K562 (cell line): ENCODE measurements at regions of chr5 and their contacts with region 1.

Region 1: DNA sequence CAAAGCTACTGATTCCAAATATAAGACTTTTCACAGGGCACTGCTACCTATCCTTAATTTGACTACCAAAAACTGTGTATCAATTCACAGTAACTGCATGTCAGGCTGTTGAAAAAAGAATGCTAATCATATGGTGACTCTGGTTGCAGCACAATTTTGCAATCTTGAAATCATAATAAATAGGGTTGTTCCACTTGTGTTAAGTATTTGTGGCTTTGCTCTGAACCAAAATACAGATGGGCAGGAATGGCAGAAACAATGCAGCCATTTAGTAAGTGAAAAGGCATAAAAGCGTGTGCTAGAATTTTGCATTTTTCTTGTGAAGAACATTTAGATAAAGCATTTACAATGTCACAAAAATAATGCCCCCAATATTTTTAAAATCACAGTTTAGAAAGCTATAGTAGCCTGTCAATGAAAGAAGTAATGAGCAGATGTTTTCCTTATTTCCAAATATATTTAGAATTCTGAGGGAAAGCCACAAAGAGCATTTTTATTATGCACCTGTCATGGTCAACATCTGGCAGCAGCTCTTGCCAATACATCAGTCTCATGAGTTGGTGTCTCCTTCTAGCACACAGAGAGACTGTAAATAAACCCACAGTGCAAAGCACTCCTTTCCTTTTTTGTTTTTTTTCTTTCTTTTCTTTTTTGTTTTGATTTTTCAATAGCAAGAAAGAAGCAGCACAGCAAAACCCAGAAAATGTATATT is 54.8 kb upstream of the PAM start:
- DNase-seq: no peak
- ATAC-seq: no peak
- H3K4me3 ChIP-seq: no peak overlapping the region
- H3K27ac ChIP-seq: no peak overlapping the region
- H3K4me1 ChIP-seq: no peaks in the 10 kb centered on the region
- H3K27me3 ChIP-seq: no peaks in the 10 kb centered on the region
- CTCF ChIP-seq: no peak
- EP300 ChIP-seq: no peak
- POLR2A ChIP-seq: no peak
- RAD21 ChIP-seq: no peak

Region 2: DNA sequence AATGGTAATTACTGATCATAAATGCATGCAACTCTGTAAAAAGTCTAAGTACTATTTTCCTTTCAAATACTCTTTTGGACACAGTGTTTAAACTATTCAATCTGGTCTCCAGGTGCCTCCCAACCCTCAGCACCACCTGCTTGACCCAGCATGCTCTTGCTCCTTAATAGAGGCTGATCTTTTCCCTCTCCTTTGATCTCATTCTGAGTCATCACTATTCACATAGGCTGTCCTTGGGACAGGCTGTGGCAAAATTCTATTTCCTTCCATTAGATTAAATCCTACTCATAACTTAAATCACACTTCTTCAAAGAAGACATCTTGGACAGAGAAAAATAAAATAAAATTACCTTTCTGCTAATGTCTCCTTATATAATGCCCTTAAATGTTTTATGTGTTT is 1597.8 kb before region 1 on chr5:
- CTCF ChIA-PET with region 1: no interaction called
- POLR2A ChIA-PET with region 1: no interaction called
- in situ Hi-C with region 1: no loop called
- intact Hi-C with region 1: no loop called
- DNase-seq: no peak
- ATAC-seq: no peak
- H3K4me3 ChIP-seq: no peak overlapping the region
- H3K27ac ChIP-seq: no peak overlapping the region
- H3K4me1 ChIP-seq: no peaks in the 10 kb centered on the region
- H3K27me3 ChIP-seq: no peaks in the 10 kb centered on the region
- CTCF ChIP-seq: no peak
- EP300 ChIP-seq: no peak
- POLR2A ChIP-seq: no peak
- RAD21 ChIP-seq: no peak

Region 3: GRCh38 chr5:104146652-104147051 is 1446.4 kb after region 1 on chr5:
- CTCF ChIA-PET with region 1: no interaction called
- POLR2A ChIA-PET with region 1: no interaction called
- in situ Hi-C with region 1: loop called (anchors 10 kb)
- intact Hi-C with region 1: no loop called
- DNase-seq: no peak
- ATAC-seq: no peak
- H3K4me3 ChIP-seq: no peak overlapping the region
- H3K27ac ChIP-seq: no peak overlapping the region
- H3K4me1 ChIP-seq: peaks cover 0 to 7% of the 10 kb centered on the region in 2 experiments; a peak in 3 of 5 replicates
- H3K27me3 ChIP-seq: no peaks in the 10 kb centered on the region
- CTCF ChIP-seq: no peak
- EP300 ChIP-seq: no peak
- POLR2A ChIP-seq: no peak
- RAD21 ChIP-seq: no peak